Pancreas (tissue), 10 donors: ENCODE measurements at regions of chr5 and their contacts with region 1.

Region 1: GRCh38 chr5:31581498-31582099 is 49.5 kb downstream of the C5orf22 start:
- DNase-seq: no peak
- ATAC-seq: peak in 3 of 4 donors; percentile 51 to 68 (median 55)
- H3K4me3 ChIP-seq: no peak overlapping the region
- H3K27ac ChIP-seq: no peak overlapping the region
- H3K4me1 ChIP-seq: no peaks in the 10 kb centered on the region
- H3K27me3 ChIP-seq: no peaks in the 10 kb centered on the region
- CTCF ChIP-seq: peak in 3 of 4 donors; percentile 25 to 37 (median 33)

Region 2: DNA sequence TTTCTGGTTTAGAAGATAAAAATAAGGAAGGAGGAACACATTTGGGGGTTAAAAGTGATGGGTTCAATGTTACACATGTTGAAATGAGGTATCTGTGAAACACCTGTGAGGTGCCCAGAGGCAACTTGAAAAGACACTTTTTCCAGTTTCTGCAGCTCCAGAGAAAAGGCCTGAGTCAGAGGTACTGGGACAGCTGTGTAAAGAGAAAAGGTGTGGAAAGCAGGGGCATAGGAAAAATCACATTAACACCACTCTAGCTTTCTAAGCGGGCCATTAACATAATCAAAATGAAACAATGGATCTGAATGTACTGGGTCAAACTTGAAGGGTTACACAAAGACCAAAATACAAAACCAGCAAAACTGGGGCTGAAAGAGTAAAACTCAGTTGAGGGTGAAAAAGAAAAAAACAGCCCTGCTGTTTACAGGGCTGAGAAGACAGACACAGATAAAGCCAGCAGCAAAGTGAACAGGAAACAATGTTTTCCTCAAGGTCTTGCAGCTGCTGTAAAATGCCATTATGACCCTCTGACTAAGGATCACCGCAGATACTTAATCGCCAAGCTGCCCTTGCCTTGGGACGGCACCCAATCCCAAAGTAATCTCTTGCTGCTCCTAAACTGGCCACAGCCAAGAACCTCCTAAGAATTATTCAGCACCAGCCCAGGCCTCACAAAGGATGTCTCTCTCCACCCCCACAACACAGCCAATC is 154.4 kb before region 1 on chr5:
- intact Hi-C with region 1: no loop called
- DNase-seq: no peak
- ATAC-seq: peak in 2 of 4 donors; percentile 21 to 44
- H3K4me3 ChIP-seq: no peak overlapping the region
- H3K27ac ChIP-seq: no peak overlapping the region
- H3K4me1 ChIP-seq: no peaks in the 10 kb centered on the region
- H3K27me3 ChIP-seq: no peaks in the 10 kb centered on the region
- CTCF ChIP-seq: no peak

Region 3: DNA sequence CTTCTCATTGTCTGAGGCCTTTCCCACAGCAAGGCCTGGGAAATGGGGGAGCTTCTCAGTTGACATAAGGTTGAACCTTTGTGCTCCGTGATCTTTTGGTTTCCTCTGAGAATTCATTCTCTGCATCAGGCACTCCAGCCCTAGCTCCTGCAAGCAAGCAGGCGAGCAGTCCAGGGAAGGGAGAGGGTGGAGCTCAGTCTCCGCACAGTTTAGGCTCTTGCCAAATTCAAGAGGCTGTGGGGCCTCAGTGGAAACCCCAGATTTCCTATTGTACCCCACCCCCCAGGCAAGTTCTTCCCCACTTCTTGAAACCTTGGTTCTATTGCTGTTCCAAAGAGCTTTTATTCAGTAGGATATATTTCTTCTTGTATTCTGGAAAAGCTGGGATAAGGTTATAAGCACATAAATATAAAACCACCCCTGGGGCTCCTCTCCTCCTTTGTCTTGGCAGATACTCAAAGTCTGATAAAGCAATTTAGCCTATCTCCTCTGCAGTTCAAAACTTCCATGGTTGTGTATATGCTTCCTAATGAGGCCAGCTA is 204.6 kb after region 1 on chr5:
- intact Hi-C with region 1: no loop called
- DNase-seq: no peak
- ATAC-seq: no peak
- H3K4me3 ChIP-seq: no peak overlapping the region
- H3K27ac ChIP-seq: no peak overlapping the region
- H3K4me1 ChIP-seq: no peaks in the 10 kb centered on the region
- H3K27me3 ChIP-seq: no peaks in the 10 kb centered on the region
- CTCF ChIP-seq: no peak

Region 4: GRCh38 chr5:31800351-31800750 is 218.8 kb after region 1 on chr5:
- intact Hi-C with region 1: loop called in 1 of 3 experiments (anchors 5 kb)
- DNase-seq: no peak
- ATAC-seq: no peak
- H3K4me3 ChIP-seq: no peak overlapping the region
- H3K27ac ChIP-seq: no peak overlapping the region
- H3K4me1 ChIP-seq: no peaks in the 10 kb centered on the region
- H3K27me3 ChIP-seq: no peaks in the 10 kb centered on the region
- CTCF ChIP-seq: no peak

Region 5: GRCh38 chr5:32092938-32093812 is 511.6 kb after region 1 on chr5:
- intact Hi-C with region 1: loop called in 1 of 3 experiments (anchors 10 kb)
- DNase-seq: peak in 3 of 6 donors; percentile 23 to 60 (median 48)
- ATAC-seq: peak; percentile 70 to 94 (median 92)
- H3K4me3 ChIP-seq: no peak overlapping the region
- H3K27ac ChIP-seq: no peak overlapping the region
- H3K4me1 ChIP-seq: no peaks in the 10 kb centered on the region
- H3K27me3 ChIP-seq: no peaks in the 10 kb centered on the region
- CTCF ChIP-seq: peak; percentile 17 to 43 (median 32)